ENCODE measurements at regions of chr21 and their contacts with region 1.

Region 1: DNA sequence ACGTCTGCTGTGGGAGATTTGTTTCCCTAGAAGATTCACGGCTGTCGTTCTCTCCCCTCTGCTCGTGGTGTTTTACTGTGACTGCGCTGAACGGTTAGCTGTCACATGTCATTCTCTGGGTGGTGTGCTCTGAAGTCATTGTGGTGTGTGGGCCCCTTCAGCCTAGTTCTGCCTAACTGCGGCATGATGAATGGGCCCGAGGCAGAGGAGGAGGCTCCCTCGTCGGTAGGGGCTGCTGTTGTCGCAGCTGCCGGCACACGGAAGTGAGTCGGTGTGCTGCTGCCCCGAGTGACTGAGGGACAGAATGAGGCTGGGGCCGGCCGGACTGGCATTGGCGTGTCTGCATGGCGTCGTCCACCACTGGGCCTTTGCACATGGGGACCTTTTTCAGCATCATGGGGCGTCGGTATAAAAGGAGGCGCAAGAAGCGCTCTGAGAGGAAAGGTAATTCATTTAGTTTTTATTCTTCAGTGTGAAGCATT is 77.9 kb downstream of the ADARB1 start:
- DNase-seq: peak; percentile 74
- H3K4me3 Mint-ChIP-seq: peak overlapping the region; percentile 81
- H3K27ac Mint-ChIP-seq: peak overlapping the region; percentile 83
- H3K4me1 Mint-ChIP-seq: peaks cover 38% of the 10 kb centered on the region
- H3K27me3 Mint-ChIP-seq: no peaks in the 10 kb centered on the region

Region 2: GRCh38 chr21:45228171-45228641 is 75.9 kb after region 1 on chr21:
- intact Hi-C with region 1: loop called (anchors 1 kb)
- DNase-seq: peak; percentile 32
- H3K4me3 Mint-ChIP-seq: no peak overlapping the region
- H3K27ac Mint-ChIP-seq: no peak overlapping the region
- H3K4me1 Mint-ChIP-seq: peaks cover 32% of the 10 kb centered on the region
- H3K27me3 Mint-ChIP-seq: peaks cover 10% of the 10 kb centered on the region

Region 3: DNA sequence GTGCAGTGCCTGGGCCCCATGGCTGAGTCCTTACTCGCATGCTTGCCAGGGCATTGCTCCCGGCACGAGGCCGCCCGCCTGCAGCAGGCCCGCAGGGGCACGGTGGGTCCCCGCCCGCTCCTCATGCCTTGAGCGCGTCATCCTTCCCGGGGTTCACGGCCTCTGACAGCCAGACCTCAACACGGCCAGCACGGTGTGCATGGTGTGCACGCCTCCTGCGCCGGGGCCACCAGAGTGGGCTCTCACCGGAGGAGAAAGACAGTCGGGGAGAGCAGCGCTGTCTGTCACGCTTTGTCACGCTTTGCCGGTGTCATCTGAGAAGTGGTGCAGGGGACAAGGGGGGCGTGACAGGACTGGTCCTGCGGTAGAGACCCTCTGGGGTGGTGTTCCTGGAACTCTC is 240.7 kb after region 1 on chr21:
- intact Hi-C with region 1: no loop called
- DNase-seq: no peak
- H3K4me3 Mint-ChIP-seq: no peak overlapping the region
- H3K27ac Mint-ChIP-seq: no peak overlapping the region
- H3K4me1 Mint-ChIP-seq: peaks cover 1% of the 10 kb centered on the region
- H3K27me3 Mint-ChIP-seq: peaks cover 15% of the 10 kb centered on the region

Measured in activated T-helper 2 cell treated with anti-CD3 and anti-CD28 coated beads, Interferon-gamma antibody, Interleukin-2, Interleukin-4, amounts not matched to agents 10 μg/mL and 5 μg/mL and 100 μg/mL, durations not matched to agents 14 hours and 24 hours and 36 hours (primary cell).